HEK293 (cell line): ENCODE measurements at regions of chr1 and their contacts with region 1.

Region 1: DNA sequence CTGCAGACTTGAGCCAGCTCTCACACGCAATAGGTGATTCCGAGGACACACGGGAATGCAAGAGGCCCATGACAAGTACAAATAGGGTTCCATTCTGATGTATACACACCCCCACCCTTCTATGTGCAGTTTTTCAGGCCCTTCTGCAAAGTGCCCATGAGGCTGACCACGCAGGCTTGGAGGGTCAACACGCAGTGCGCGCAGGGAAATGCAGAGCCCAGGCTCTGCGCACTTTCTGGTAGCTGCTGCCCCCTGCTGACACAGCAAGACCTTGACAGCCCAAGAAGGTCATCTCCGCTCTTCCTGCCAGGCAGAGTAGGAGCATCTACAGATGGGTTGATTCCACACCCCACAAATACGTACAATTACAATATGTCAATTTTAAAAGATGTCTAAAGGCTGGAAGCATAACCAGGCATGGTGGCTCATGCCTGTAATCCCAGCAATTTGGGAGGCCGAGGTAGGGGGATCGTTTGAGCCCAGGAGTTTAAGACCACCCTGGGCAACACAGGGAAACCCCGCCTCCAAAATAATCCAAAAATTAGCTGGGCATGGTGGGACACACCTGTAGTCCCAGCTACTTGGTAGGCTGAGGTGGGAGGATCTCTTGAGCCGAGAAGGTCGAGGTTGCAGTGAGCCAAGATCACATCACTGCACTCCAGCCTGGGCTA is 18.5 kb downstream of the SH3BP5L start:
- H3K4me3 ChIP-seq: no peak overlapping the region
- H3K27ac ChIP-seq: no peak overlapping the region
- H3K4me1 ChIP-seq: no peaks in the 10 kb centered on the region
- CTCF ChIP-seq: no peak

Region 2: DNA sequence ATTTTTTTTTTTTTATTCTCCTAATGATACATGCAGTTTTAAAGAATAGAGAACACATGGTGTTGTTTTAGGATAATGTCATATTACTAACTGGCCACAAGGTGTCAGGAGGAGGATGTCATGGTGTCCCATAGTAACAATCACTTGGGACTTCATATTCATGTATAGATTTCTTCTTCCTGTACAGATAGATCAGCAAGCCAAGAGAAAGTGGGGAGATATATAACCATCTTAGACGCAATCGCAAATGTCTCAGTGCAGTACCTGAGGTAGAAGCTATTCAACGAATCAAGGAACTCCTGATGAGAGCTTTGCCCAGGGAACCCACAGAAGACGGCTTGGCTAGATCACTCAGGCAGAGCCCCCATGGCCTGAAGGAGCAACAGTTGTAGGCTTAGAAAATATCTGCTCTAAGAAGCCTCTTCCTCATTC is 184.6 kb before region 1 on chr1:
- CTCF ChIA-PET with region 1: interaction called, 25 read pairs
- POLR2A ChIA-PET with region 1: no interaction called
- H3K4me3 ChIP-seq: no peak overlapping the region
- H3K27ac ChIP-seq: no peak overlapping the region
- H3K4me1 ChIP-seq: no peaks in the 10 kb centered on the region
- CTCF ChIP-seq: no peak

Region 3: DNA sequence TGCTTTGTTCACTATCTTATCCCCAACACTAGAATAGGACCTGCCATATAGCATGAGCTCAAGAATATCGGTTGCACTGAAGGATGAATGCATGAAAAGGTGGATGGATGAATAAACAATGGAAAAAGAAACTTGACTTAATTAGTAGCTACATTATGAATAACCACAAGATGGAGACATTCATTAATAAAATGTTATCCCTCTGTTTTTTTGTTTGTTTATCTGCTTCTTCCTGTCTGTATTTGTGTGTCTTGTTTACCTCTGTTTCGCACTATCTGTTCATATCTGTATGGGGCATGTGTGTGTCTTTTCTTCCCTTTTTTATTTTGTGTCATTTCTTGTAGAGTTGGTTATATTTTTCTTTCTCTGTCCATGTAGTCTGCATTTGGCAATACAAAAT is 103.5 kb before region 1 on chr1:
- CTCF ChIA-PET with region 1: no interaction called
- POLR2A ChIA-PET with region 1: no interaction called
- H3K4me3 ChIP-seq: no peak overlapping the region
- H3K27ac ChIP-seq: no peak overlapping the region
- H3K4me1 ChIP-seq: no peaks in the 10 kb centered on the region
- CTCF ChIP-seq: no peak

Region 4: GRCh38 chr1:248786156-248786555 is 21.0 kb before region 1 on chr1:
- CTCF ChIA-PET with region 1: no interaction called
- POLR2A ChIA-PET with region 1: no interaction called
- H3K4me3 ChIP-seq: no peak overlapping the region
- H3K27ac ChIP-seq: no peak overlapping the region
- H3K4me1 ChIP-seq: no peaks in the 10 kb centered on the region
- CTCF ChIP-seq: no peak